A673 (cell line): ENCODE measurements at regions of chr13 and their contacts with region 1.

Region 1: DNA sequence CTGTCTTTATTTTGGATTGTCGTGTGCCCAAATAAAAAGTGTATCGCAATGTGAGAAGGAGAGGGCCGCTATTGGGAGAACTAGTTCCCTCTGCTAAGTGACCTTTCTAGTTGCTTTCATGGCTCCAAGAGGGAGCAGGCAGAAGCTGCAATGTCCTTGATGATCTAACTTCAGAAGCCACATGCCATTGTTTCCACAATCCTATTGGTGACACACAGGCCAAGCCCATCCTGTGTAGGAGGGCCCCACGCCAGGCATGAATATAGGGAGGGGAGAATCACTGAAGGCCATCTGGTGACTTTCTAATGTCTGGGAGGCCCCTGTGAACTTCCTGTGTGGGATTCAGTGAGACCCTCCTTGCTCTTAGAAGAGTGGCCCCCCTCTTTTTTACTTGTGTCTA is 47.8 kb upstream of the KPNA3 start:
- DNase-seq: peak; percentile 11
- H3K4me3 ChIP-seq: no peak overlapping the region
- H3K27ac ChIP-seq: no peak overlapping the region
- H3K4me1 ChIP-seq: no peaks in the 10 kb centered on the region
- H3K27me3 ChIP-seq: no peaks in the 10 kb centered on the region
- CTCF ChIP-seq: no peak

Region 2: GRCh38 chr13:49300739-49301589 is 539.3 kb before region 1 on chr13:
- CTCF ChIA-PET with region 1: no interaction called
- POLR2A ChIA-PET with region 1: no interaction called
- intact Hi-C with region 1: loop called (anchors 10 kb)
- DNase-seq: peak; percentile 77
- H3K4me3 ChIP-seq: no peak overlapping the region
- H3K27ac ChIP-seq: no peak overlapping the region
- H3K4me1 ChIP-seq: no peaks in the 10 kb centered on the region
- H3K27me3 ChIP-seq: no peaks in the 10 kb centered on the region
- CTCF ChIP-seq: peak; percentile 91

Region 3: DNA sequence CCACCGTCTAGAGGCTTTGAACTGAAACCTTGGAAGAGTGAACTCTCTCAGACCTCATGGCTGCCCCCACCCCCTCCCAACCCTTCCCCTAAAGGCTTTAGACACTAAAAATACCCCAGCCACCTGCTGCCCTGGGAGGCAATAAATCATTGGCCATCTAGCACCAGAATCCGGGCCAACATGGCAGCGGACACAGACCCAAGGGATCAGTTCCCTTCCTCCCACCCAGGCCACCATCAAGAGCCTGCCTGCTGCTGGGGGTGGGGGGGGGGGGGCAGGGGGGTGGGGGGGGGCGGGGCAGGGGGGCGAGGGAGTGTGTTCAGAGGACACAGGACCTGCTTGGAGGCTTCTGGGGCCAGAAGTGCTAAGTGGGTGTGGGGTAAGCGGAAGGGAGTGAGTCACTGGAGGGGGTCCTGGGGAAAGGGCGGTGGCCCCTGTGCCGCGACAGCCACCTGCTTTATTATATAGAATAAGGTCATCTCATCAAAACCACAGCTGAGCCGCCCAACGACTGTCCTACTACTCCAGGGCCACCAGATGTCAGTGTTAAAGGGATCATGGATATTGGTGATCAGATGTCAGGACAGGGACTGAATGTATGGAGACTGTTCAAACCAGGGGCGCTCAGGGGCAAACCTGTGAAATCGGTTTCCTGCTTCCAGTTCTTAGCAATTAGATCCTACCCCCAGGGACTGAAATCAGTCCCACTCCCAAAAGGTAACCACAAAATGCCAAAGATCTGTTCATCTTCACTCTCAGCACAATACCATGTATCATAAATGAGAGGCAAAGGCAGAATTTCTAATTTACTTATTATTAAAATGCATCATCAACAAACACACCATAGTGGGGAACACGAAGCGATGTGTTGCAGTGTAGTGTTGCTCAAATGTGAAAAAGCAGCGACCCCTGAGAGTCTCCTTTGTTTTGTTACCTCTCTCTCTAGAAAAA is 187.6 kb before region 1 on chr13:
- CTCF ChIA-PET with region 1: no interaction called
- POLR2A ChIA-PET with region 1: no interaction called
- intact Hi-C with region 1: loop called (anchors 5 kb)
- DNase-seq: peak; percentile 58
- H3K4me3 ChIP-seq: no peak overlapping the region
- H3K27ac ChIP-seq: no peak overlapping the region
- H3K4me1 ChIP-seq: no peaks in the 10 kb centered on the region
- H3K27me3 ChIP-seq: no peaks in the 10 kb centered on the region
- CTCF ChIP-seq: peak; percentile 48

Region 4: GRCh38 chr13:49669735-49670309 is 170.4 kb before region 1 on chr13:
- CTCF ChIA-PET with region 1: no interaction called
- POLR2A ChIA-PET with region 1: no interaction called
- intact Hi-C with region 1: loop called (anchors 5 kb)
- DNase-seq: peak; percentile 67
- H3K4me3 ChIP-seq: no peak overlapping the region
- H3K27ac ChIP-seq: no peak overlapping the region
- H3K4me1 ChIP-seq: peaks cover 11% of the 10 kb centered on the region
- H3K27me3 ChIP-seq: no peaks in the 10 kb centered on the region
- CTCF ChIP-seq: peak; percentile 69